Posterior vena cava (tissue), 2 donors: ENCODE measurements at regions of chrX and their contacts with region 1.

Region 1: DNA sequence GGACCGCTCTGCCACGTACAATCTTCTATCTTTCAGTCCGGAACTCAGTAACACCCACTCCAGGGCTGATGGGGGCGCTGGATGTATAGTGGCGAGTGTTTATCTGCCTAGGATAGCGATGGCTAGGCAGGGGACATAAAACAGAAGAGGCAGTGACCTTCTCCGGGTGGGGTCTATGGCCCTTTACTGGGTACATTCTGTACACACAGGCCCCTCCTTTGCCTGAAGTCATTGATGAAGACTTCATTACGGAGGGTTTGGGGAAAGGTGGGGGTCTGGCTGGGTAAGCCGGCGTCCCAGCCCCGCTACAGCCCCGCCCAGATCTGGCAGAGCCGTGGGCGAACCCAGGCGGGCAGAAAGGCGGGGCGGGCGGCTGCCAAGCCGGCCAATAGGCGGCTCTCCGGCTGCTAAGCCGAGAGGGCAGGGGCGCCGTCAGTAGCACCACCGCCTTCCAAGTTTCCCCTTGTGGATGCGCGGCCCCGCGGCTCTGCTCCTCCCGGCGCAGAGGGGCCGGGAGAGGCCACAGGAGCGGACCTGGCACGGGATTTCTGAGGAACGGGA is at the start of gene CHST7:
- DNase-seq: peak; percentile 88
- total RNA-seq, gene CHST7: 6.0 to 7.3 TPM

Region 2: DNA sequence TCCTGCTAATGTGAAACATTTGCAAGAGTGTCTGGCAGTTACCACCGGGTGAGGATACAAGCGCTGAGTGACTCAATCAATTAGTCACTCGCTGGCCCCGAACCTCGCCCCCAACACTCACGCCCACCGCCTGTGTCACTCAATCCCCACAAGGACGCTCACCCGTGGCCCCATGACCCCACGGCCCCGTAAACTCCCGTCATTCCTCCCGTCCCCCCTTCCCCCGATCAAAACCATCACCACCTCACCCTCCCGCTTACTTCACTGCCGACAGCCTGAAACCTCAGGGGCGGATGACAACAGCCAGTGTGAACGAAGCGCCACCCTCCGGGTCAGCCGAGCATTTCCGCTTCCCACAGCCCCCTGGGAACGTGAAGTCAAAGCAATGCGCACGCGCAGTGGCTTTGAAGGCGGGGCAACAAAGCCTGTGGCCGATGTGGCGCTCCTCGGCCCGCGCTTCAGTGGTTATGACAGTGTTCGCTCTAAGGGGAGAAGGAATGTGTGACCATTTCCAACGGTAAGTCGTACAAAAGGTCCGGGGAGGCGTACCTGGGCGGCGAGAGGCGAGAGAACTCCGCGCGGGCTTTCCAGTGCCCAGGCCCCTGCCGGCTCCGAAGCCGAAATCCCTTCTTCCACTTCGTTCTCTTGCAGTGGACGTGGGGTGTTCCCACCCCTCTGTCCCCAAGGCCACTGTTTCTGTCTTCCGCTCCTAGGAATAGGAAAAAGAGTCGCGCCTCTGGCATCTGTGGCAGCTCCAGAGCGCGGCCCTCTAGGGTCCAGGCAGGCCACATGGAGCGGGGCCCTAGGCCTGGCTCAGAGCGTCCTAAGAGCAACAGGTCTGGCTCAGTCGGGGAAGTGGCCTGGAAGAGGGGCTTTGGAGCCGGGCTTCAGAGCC is 28.1 kb before region 1 on chrX and contains the start of gene ZNF674:
- intact Hi-C with region 1: no loop called
- DNase-seq: peak; percentile 98
- total RNA-seq, gene ZNF674: 4.6 to 5.6 TPM

Region 3: GRCh38 chrX:46642145-46642544 is 68.7 kb after region 1 on chrX:
- intact Hi-C with region 1: loop called in 1 of 2 experiments (anchors 10 kb)
- DNase-seq: no peak